GM18951 (cell line): ENCODE measurements at regions of chr7 and their contacts with region 1.

Region 1: DNA sequence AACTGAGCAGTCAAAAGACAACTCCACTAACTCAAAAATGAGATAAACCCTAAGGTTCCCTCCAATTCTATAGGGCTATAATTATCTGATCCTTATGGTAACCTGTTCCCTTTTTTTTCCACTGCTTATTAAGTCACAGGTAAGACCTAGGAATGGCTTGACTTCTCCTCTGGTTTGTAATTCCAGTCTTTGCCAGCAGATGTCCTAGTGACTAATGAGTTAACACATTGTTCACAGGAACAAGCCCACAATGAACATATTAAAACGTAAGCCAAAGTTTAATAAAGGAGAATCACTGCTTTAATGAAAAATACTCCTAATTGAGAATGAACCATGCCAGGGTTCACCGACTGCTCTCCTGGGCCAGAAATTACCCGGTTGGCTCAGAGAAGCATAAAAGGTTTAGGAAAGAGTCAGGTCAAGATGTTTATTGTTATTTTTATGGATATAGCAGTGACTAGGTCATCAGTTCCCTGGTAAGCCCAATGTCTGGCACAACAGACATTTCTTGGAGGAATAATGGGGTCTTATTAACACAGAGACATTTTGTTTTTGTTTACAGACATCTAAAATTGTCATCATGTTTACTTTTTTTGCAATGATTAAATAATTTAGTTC is 120.1 kb downstream of the ELAPOR2 start:
- POLR2A ChIP-seq: no peak

Region 2: DNA sequence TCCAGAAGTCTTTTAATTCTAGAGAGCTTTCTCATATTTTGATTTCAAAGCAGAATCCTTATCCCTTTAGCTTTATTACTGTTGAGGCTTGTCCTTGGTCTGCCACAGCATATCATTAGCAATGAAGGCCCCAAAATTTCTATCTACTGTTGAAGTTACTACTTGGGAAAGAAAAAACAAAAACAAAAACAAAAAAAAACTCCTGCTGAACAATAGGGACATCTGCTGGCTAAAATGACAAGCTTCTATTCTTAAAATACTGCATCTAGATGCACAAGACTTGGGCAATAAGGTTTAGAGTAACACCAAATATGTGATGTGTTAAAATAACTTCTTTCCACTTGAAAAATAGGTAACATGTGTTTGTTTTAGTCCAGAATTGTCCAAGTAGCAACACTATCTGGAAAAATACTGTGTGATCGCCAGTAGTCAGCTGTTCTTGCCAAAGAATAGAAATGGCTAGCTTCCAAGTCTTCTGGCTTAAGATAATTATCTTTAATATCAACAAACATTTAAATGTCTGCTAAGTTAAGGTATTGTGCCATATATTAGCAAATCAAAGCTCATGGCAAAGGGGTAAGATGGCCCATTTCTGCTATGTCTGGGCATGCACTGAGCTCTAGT is 209.1 kb after region 1 on chr7:
- in situ Hi-C with region 1: loop called (anchors 5 kb)
- POLR2A ChIP-seq: no peak

Region 3: DNA sequence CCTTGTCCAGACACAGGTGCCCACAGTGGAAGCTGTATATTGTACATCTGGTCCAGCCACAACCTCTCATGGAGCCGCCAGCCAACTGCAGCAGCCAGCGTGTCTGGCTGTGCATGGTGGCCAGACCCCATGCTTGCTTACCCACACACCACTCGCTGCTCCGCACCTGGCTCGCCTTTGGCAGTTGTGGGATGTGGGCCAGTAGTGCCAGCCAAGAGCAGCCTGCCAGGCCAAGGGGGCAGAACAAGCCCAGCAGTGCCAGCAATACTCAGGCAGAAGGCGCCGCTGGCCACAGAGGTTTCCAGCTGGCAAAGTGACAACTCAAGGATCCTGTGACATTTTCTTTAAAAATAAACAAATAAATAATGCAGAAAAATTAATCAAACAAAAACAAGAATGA is 291.9 kb after region 1 on chr7:
- in situ Hi-C with region 1: loop called (anchors 10 kb)
- POLR2A ChIP-seq: no peak

Region 4: GRCh38 chr7:87416682-87417587 is 477.6 kb after region 1 on chr7:
- in situ Hi-C with region 1: loop called (anchors 25 kb)
- POLR2A ChIP-seq: no peak